ENCODE measurements at regions of chr7 and their contacts with region 1.

Region 1: DNA sequence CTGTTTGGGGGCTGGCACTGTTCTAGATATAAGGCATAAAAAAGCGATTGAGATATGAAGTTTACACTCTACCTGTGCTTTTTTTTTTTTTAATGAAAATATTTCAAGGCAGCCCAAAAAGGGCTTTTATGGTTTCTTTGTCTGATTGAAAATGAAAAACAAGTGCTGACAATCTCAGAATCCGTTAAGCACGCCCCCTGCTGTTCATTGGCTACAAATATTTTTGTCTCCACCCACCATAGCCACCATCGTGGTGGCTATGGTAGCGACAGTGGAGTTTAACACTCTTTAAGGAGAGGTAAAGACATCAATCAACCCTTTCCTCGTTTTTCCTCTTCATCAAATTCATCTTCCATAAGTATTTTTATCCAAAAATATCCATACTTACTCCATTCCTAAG is 94.2 kb downstream of the CD36 start:
- DNase-seq: no peak
- ATAC-seq: no peak
- H3K4me3 ChIP-seq: no peak overlapping the region
- H3K27ac ChIP-seq: no peak overlapping the region
- H3K4me1 ChIP-seq: peaks cover 0 to 11% (median 0%) of the 10 kb centered on the region in 9 donors
- H3K27me3 ChIP-seq: no peaks in the 10 kb centered on the region
- CTCF ChIP-seq: peak in 4 of 9 donors; percentile 8 to 29 (median 20)

Region 2: GRCh38 chr7:80533287-80533686 is 199.3 kb before region 1 on chr7:
- intact Hi-C with region 1: no loop called
- DNase-seq: no peak
- ATAC-seq: no peak
- H3K4me3 ChIP-seq: no peak overlapping the region
- H3K27ac ChIP-seq: no peak overlapping the region
- H3K4me1 ChIP-seq: peaks cover 0 to 29% (median 10%) of the 10 kb centered on the region in 9 donors
- H3K27me3 ChIP-seq: no peaks in the 10 kb centered on the region
- CTCF ChIP-seq: no peak

Region 3: GRCh38 chr7:80794631-80795573 is 62.3 kb after region 1 on chr7:
- intact Hi-C with region 1: loop called in 1 of 10 experiments (anchors 10 kb)
- DNase-seq: no peak
- ATAC-seq: peak in 5 of 8 donors; percentile 27 to 63 (median 46)
- H3K4me3 ChIP-seq: no peak overlapping the region
- H3K27ac ChIP-seq: peak overlapping the region in 6 of 10 donors; percentile 7 to 70 (median 28)
- H3K4me1 ChIP-seq: peaks cover 0 to 37% (median 19%) of the 10 kb centered on the region in 9 donors
- H3K27me3 ChIP-seq: no peaks in the 10 kb centered on the region
- CTCF ChIP-seq: no peak

Region 4: DNA sequence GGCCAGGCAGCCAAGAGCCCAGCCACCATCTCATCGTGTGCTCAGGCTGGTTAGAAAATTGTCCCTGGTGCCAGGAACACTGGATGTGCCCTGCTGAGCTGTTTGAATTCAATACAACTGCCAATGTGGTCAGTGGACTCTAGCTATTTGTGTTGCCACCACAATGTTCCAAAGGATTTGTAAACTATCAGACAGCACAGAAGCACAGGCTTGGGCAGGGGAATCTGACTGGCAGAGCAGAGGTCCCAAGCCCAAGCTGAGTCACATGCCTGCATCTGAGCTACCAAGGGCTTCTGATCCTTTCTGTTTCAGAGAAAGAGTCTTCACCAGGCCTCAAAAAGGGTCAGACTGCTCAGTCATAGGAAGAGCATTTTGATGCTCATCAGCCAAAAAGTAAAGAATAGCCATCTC is 418.3 kb after region 1 on chr7:
- intact Hi-C with region 1: no loop called
- DNase-seq: no peak
- ATAC-seq: peak in 6 of 8 donors; percentile 42 to 99 (median 70)
- H3K4me3 ChIP-seq: no peak overlapping the region
- H3K27ac ChIP-seq: peak overlapping the region in 3 of 10 donors; percentile 18 to 39 (median 31)
- H3K4me1 ChIP-seq: peaks cover 0 to 10% (median 0%) of the 10 kb centered on the region in 9 donors
- H3K27me3 ChIP-seq: no peaks in the 10 kb centered on the region
- CTCF ChIP-seq: no peak

Region 5: DNA sequence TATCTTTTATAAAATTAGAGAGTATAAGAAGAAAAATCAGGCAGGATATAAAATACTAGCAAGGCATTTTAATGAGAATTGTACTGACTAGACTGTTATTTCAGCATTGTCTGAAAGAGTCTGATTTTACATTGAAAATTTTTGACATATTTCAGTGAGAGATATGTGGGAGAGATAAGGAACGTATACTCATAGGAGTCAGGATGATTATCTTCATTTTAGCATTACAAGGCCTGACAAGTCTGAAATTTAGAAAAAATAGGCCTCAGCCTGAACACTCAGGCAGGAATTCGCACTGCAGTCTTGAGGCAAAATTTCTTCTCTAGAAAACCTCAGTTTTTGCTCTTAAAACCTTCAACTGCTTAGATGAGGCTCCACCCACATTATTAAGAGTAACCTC is 651.2 kb after region 1 on chr7:
- intact Hi-C with region 1: no loop called
- DNase-seq: no peak
- ATAC-seq: no peak
- H3K4me3 ChIP-seq: no peak overlapping the region
- H3K27ac ChIP-seq: no peak overlapping the region
- H3K4me1 ChIP-seq: no peaks in the 10 kb centered on the region
- H3K27me3 ChIP-seq: no peaks in the 10 kb centered on the region
- CTCF ChIP-seq: no peak

Region 6: GRCh38 chr7:81549484-81550016 is 816.9 kb after region 1 on chr7:
- intact Hi-C with region 1: no loop called
- DNase-seq: no peak
- ATAC-seq: no peak
- H3K4me3 ChIP-seq: no peak overlapping the region
- H3K27ac ChIP-seq: no peak overlapping the region
- H3K4me1 ChIP-seq: no peaks in the 10 kb centered on the region
- H3K27me3 ChIP-seq: no peaks in the 10 kb centered on the region
- CTCF ChIP-seq: no peak